ENCODE measurements at regions of chr11 and their contacts with region 1.

Region 1: GRCh38 chr11:82718307-82718706 is 15.4 kb downstream of the FAM181B start:
- DNase-seq: peak in 1 of 2 experiments; percentile 35
- H3K4me3 ChIP-seq: no peak overlapping the region
- H3K4me3 Mint-ChIP-seq: no peak overlapping the region
- H3K27ac Mint-ChIP-seq: no peak overlapping the region
- H3K4me1 ChIP-seq: no peaks in the 10 kb centered on the region
- H3K4me1 Mint-ChIP-seq: no peaks in the 10 kb centered on the region
- H3K27me3 ChIP-seq: peaks cover 1% of the 10 kb centered on the region; the same call in 1 of the 2 replicates
- H3K27me3 Mint-ChIP-seq: peaks cover 4% of the 10 kb centered on the region
- CTCF ChIP-seq: peak; percentile 88 to 94

Region 2: GRCh38 chr11:82733444-82734119 is 15.3 kb after region 1 on chr11 and contains the start of gene FAM181B:
- CTCF ChIA-PET with region 1: interaction called, 7 read pairs
- POLR2A ChIA-PET with region 1: interaction called, 3 read pairs
- intact Hi-C with region 1: loop called (anchors 1 kb)
- DNase-seq: peak; percentile 61 to 72
- H3K4me3 ChIP-seq: peak within 1 kb of the TSS; percentile 51
- H3K4me3 Mint-ChIP-seq: peak within 1 kb of the TSS; percentile 73
- H3K27ac Mint-ChIP-seq: no peak within 1 kb of the TSS
- H3K4me1 ChIP-seq: peaks cover 13% of the 10 kb centered on the region; the same call in 1 of the 2 replicates
- H3K4me1 Mint-ChIP-seq: no peaks in the 10 kb centered on the region
- H3K27me3 ChIP-seq: peaks cover 7% of the 10 kb centered on the region
- H3K27me3 Mint-ChIP-seq: peaks cover 50% of the 10 kb centered on the region
- CTCF ChIP-seq: no peak
- total RNA-seq, gene FAM181B: not detected in 2 replicates

Region 3: GRCh38 chr11:82818409-82819043 is 100.2 kb after region 1 on chr11:
- CTCF ChIA-PET with region 1: no interaction called
- POLR2A ChIA-PET with region 1: no interaction called
- intact Hi-C with region 1: loop called (anchors 1 kb)
- DNase-seq: peak; percentile 56 to 64
- H3K4me3 ChIP-seq: no peak overlapping the region
- H3K4me3 Mint-ChIP-seq: no peak overlapping the region
- H3K27ac Mint-ChIP-seq: peak overlapping the region; percentile 64
- H3K4me1 ChIP-seq: peaks cover 15% of the 10 kb centered on the region
- H3K4me1 Mint-ChIP-seq: peaks cover 11% of the 10 kb centered on the region
- H3K27me3 ChIP-seq: no peaks in the 10 kb centered on the region
- H3K27me3 Mint-ChIP-seq: no peaks in the 10 kb centered on the region
- CTCF ChIP-seq: peak; percentile 29 to 43

Region 4: GRCh38 chr11:82867495-82868082 is 149.3 kb after region 1 on chr11:
- CTCF ChIA-PET with region 1: interaction called, 6 read pairs
- POLR2A ChIA-PET with region 1: no interaction called
- intact Hi-C with region 1: loop called (anchors 1 kb)
- DNase-seq: peak; percentile 84 to 89
- H3K4me3 ChIP-seq: no peak overlapping the region
- H3K4me3 Mint-ChIP-seq: no peak overlapping the region
- H3K27ac Mint-ChIP-seq: no peak overlapping the region
- H3K4me1 ChIP-seq: no peaks in the 10 kb centered on the region
- H3K4me1 Mint-ChIP-seq: no peaks in the 10 kb centered on the region
- H3K27me3 ChIP-seq: no peaks in the 10 kb centered on the region
- H3K27me3 Mint-ChIP-seq: no peaks in the 10 kb centered on the region
- CTCF ChIP-seq: peak; percentile 75 to 95

Region 5: DNA sequence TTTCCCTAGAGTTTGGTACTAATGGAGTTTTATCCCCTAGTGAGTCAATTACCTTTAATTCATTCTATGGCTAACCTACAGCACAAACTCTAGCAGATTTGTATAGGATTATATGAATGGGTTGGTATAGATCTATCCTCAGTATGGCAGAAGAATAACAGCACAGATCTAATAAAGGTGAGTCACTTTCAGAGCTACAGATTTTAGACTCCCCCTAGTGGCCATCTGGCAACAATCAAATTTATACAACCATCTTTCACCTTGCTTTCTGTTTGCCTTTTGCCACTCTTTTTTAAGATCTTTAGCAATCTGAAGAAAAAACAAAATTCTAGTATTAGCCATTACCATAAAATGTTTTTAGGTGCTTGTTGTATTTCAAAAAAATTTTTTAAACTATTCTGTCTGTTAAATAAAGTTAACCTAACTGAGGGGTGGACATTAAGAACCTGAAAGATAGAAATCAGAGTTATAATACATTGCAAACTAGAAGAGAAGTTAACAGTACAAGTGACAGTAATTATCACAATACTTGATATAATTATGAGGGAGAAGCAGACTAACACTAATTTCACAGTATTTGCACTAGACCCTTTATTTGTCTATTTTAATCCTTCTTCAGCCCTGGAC is 209.1 kb after region 1 on chr11:
- CTCF ChIA-PET with region 1: interaction called, 9 read pairs
- POLR2A ChIA-PET with region 1: no interaction called
- intact Hi-C with region 1: loop called (anchors 1 kb)
- DNase-seq: peak in 1 of 2 experiments; percentile 67
- H3K4me3 ChIP-seq: no peak overlapping the region
- H3K4me3 Mint-ChIP-seq: no peak overlapping the region
- H3K27ac Mint-ChIP-seq: no peak overlapping the region
- H3K4me1 ChIP-seq: no peaks in the 10 kb centered on the region
- H3K4me1 Mint-ChIP-seq: peaks cover 11% of the 10 kb centered on the region
- H3K27me3 ChIP-seq: no peaks in the 10 kb centered on the region
- H3K27me3 Mint-ChIP-seq: no peaks in the 10 kb centered on the region
- CTCF ChIP-seq: peak; percentile 87 to 88

Region 6: DNA sequence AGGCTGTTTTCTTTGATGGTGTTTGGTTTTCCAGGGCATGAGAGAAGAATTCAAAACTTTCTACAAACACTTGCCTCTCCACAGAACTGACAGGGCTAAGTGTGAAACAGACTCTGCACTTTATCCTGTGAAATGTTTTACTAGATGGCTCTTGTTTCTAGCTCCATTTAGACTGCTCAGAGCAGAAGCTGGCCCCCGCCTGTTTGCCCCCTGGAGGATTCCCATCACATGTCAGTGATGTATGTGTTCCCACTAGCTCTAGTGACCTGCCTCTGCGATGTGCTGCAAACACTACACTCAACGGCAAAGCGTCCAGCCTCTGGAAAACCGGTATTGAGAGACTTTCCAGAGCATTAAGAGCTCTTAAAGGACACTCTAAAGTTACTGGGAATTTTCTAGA is 397.2 kb after region 1 on chr11:
- CTCF ChIA-PET with region 1: no interaction called
- POLR2A ChIA-PET with region 1: no interaction called
- intact Hi-C with region 1: no loop called
- DNase-seq: peak in 1 of 2 experiments; percentile 24
- H3K4me3 ChIP-seq: no peak overlapping the region
- H3K4me3 Mint-ChIP-seq: no peak overlapping the region
- H3K27ac Mint-ChIP-seq: no peak overlapping the region
- H3K4me1 ChIP-seq: no peaks in the 10 kb centered on the region; the same call in 1 of the 2 replicates
- H3K4me1 Mint-ChIP-seq: peaks cover 6% of the 10 kb centered on the region
- H3K27me3 ChIP-seq: no peaks in the 10 kb centered on the region
- H3K27me3 Mint-ChIP-seq: no peaks in the 10 kb centered on the region
- CTCF ChIP-seq: peak in 1 of 2 experiments; percentile 36

Measured in Caco-2 (cell line).